H1 (cell line): ENCODE measurements at regions of chr2 and their contacts with region 1.

Region 1: GRCh38 chr2:175251425-175252041 is 70.0 kb upstream of the ATP5MC3 start:
- DNase-seq: no peak
- H3K4me3 ChIP-seq: no peak overlapping the region
- H3K27ac ChIP-seq: no peak overlapping the region
- H3K4me1 ChIP-seq: no peaks in the 10 kb centered on the region
- H3K27me3 ChIP-seq: no peaks in the 10 kb centered on the region
- CTCF ChIP-seq: peak in 2 of 3 experiments; percentile 52 to 61; a peak in 2 of 4 replicates
- EP300 ChIP-seq: no peak
- POLR2A ChIP-seq: no peak
- RAD21 ChIP-seq: peak; percentile 43 to 52

Region 2: GRCh38 chr2:175111200-175111657 is 140.3 kb before region 1 on chr2:
- CTCF ChIA-PET with region 1: interaction called, 10 read pairs
- POLR2A ChIA-PET with region 1: no interaction called
- DNase-seq: no peak
- H3K4me3 ChIP-seq: no peak overlapping the region
- H3K27ac ChIP-seq: no peak overlapping the region
- H3K4me1 ChIP-seq: no peaks in the 10 kb centered on the region
- H3K27me3 ChIP-seq: no peaks in the 10 kb centered on the region
- CTCF ChIP-seq: peak in 2 of 3 experiments; percentile 20 to 57; a peak in 2 of 4 replicates
- EP300 ChIP-seq: no peak
- POLR2A ChIP-seq: no peak
- RAD21 ChIP-seq: peak; percentile 50 to 59

Region 3: DNA sequence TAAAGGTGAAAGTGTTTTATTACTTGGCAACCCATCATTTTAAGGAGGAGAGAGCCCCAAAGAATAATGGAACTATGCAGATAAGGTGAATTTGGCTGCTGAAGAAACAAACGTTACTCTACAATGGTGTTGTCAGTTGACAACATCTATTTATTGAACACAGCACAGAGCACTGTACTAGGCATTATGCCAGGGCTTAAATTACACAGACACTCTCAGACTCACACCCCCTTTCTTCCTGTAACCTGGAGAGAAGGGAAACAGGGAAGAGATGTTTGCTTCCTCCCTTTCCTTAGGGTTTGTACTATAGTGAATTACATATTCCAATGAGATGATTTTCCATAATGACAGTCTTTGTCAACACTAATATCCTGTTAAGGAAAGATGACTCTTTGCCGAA is 24.0 kb after region 1 on chr2:
- CTCF ChIA-PET with region 1: interaction called, 84 read pairs
- POLR2A ChIA-PET with region 1: no interaction called
- DNase-seq: no peak
- H3K4me3 ChIP-seq: no peak overlapping the region
- H3K27ac ChIP-seq: no peak overlapping the region
- H3K4me1 ChIP-seq: no peaks in the 10 kb centered on the region
- H3K27me3 ChIP-seq: no peaks in the 10 kb centered on the region
- CTCF ChIP-seq: no peak
- EP300 ChIP-seq: no peak
- POLR2A ChIP-seq: no peak
- RAD21 ChIP-seq: no peak

Region 4: GRCh38 chr2:175282290-175282689 is 30.8 kb after region 1 on chr2:
- CTCF ChIA-PET with region 1: interaction called, 84 read pairs
- POLR2A ChIA-PET with region 1: no interaction called
- DNase-seq: no peak
- H3K4me3 ChIP-seq: no peak overlapping the region
- H3K27ac ChIP-seq: no peak overlapping the region
- H3K4me1 ChIP-seq: no peaks in the 10 kb centered on the region
- H3K27me3 ChIP-seq: no peaks in the 10 kb centered on the region
- CTCF ChIP-seq: peak in 2 of 3 experiments; percentile 25 to 49; a peak in 2 of 4 replicates
- EP300 ChIP-seq: no peak
- POLR2A ChIP-seq: no peak
- RAD21 ChIP-seq: peak; percentile 50 to 56

Region 5: GRCh38 chr2:175309799-175310198 is 58.3 kb after region 1 on chr2:
- CTCF ChIA-PET with region 1: interaction called, 22 read pairs
- POLR2A ChIA-PET with region 1: no interaction called
- DNase-seq: peak; percentile 23 to 54
- H3K4me3 ChIP-seq: no peak overlapping the region
- H3K27ac ChIP-seq: no peak overlapping the region
- H3K4me1 ChIP-seq: no peaks in the 10 kb centered on the region
- H3K27me3 ChIP-seq: no peaks in the 10 kb centered on the region
- CTCF ChIP-seq: peak; percentile 32 to 52 (median 52)
- EP300 ChIP-seq: no peak
- POLR2A ChIP-seq: no peak
- RAD21 ChIP-seq: peak; percentile 58 to 73

Region 6: DNA sequence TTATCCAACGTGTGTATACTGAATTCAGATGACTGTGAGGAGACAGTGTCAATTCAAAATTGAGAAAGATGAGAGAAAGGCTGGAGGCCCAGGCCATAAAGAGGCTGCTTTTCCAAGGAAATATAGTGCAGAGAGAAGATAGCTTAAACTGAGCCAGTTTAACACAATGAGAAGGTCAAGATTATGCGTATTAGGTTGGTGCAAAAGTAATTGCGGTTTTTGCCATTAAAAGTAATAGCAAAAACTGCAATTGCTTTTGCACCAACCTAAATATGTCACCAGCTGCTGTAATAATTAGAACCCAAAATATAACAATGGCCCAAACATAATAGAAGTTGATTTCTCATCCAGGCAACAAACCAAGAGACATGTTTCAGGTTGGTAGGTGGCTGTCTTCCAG is 78.7 kb after region 1 on chr2:
- CTCF ChIA-PET with region 1: interaction called, 28 read pairs
- POLR2A ChIA-PET with region 1: no interaction called
- DNase-seq: no peak
- H3K4me3 ChIP-seq: no peak overlapping the region
- H3K27ac ChIP-seq: no peak overlapping the region
- H3K4me1 ChIP-seq: no peaks in the 10 kb centered on the region
- H3K27me3 ChIP-seq: no peaks in the 10 kb centered on the region
- CTCF ChIP-seq: no peak
- EP300 ChIP-seq: no peak
- POLR2A ChIP-seq: no peak
- RAD21 ChIP-seq: no peak

Region 7: GRCh38 chr2:175454953-175455389 is 203.4 kb after region 1 on chr2:
- CTCF ChIA-PET with region 1: no interaction called
- POLR2A ChIA-PET with region 1: no interaction called
- DNase-seq: no peak
- H3K4me3 ChIP-seq: no peak overlapping the region
- H3K27ac ChIP-seq: no peak overlapping the region
- H3K4me1 ChIP-seq: no peaks in the 10 kb centered on the region
- H3K27me3 ChIP-seq: peaks cover 0 to 1% (median 0%) of the 10 kb centered on the region in 4 experiments; a peak in 1 of 7 replicates
- CTCF ChIP-seq: no peak
- EP300 ChIP-seq: no peak
- POLR2A ChIP-seq: no peak
- RAD21 ChIP-seq: peak in 1 of 2 experiments; percentile 14; a peak in 1 of 4 replicates

Region 8: GRCh38 chr2:176096986-176097819 is 845.7 kb after region 1 on chr2:
- CTCF ChIA-PET with region 1: interaction called, 11 read pairs
- POLR2A ChIA-PET with region 1: no interaction called
- DNase-seq: peak; percentile 86 to 91
- H3K4me3 ChIP-seq: peak overlapping the region; percentile 1 to 54 (median 22); a peak in 6 of 8 replicates
- H3K27ac ChIP-seq: no peak overlapping the region
- H3K4me1 ChIP-seq: peaks cover 0 to 28% (median 16%) of the 10 kb centered on the region in 4 experiments; a peak in 6 of 7 replicates
- H3K27me3 ChIP-seq: peaks cover 79 to 98% (median 91%) of the 10 kb centered on the region in 4 experiments
- CTCF ChIP-seq: peak in 2 of 3 experiments; percentile 89 to 90; a peak in 3 of 4 replicates
- EP300 ChIP-seq: no peak
- POLR2A ChIP-seq: no peak
- RAD21 ChIP-seq: peak; percentile 93 to 95